Motor neuron (in vitro differentiated cells): ENCODE measurements at regions of chr2 and their contacts with region 1.

Region 1: DNA sequence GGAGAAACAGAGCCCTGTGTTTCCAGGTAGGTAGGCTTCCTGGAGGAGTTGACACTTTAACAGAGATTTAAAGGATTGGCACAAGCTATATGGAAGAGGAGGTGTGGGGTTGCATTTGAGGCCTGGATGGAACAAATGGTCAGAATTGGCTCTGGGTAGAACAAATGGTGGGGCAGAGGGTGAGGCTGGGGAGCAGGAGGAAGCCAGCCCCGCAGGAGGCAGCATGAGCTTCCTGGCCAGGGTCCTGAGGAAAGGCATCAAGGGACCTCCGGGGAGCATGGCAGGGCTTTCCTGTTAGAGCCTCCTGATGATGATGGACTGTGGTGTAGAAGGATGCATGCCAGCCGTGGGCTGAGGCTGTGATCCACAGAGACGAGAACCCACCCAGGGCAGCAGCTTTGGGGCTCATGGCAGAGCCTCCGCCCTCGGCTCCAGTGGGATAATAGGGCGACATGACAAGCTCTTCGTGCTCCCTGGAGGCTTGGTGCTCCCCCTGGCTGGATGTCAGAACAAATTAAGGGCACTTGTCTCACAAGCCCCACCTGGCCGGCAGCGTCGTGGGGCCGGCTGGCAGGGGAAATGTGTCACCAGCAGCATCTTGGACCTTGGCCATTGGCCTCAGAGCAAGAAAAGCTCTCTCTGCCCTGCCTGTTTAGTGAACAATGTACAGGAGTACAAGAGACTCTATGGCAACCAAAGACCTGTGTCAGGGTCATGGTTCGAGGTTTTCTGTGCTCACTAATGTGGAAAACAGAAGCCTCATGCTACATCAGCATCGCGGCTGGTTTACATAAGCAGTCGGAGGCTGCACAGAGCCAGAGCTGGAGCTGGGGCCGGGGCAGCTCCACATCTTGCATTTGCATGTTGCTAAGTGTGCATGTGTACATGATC is 153.5 kb downstream of the MYCN start:
- ATAC-seq: peak in 5 of 8 experiments; percentile 72 to 95 (median 86)
- H3K4me3 ChIP-seq: no peak overlapping the region
- H3K27ac ChIP-seq: no peak overlapping the region
- H3K4me1 ChIP-seq: peaks cover 6 to 16% of the 10 kb centered on the region in 2 donors

Region 2: GRCh38 chr2:16179701-16180416 is 86.0 kb after region 1 on chr2:
- in situ Hi-C with region 1: loop called in 1 of 9 experiments (anchors 25 kb)
- ATAC-seq: peak in 5 of 8 experiments; percentile 92 to 99 (median 96)
- H3K4me3 ChIP-seq: no peak overlapping the region
- H3K27ac ChIP-seq: no peak overlapping the region
- H3K4me1 ChIP-seq: peaks cover 2 to 9% of the 10 kb centered on the region in 2 donors